Adrenal gland (tissue), 19 donors: ENCODE measurements at regions of chr20 and their contacts with region 1.

Region 1: GRCh38 chr20:38692436-38693411 is 31.6 kb upstream of the SLC32A1 start:
- DNase-seq: peak; percentile 32 to 74 (median 65)
- H3K4me3 ChIP-seq: no peak overlapping the region
- H3K27ac ChIP-seq: no peak overlapping the region
- H3K4me1 ChIP-seq: no peaks in the 10 kb centered on the region
- H3K27me3 ChIP-seq: peaks cover 6% of the 10 kb centered on the region
- CTCF ChIP-seq: no peak
- POLR2A ChIP-seq: no peak

Region 2: GRCh38 chr20:38590676-38591471 is 101.8 kb before region 1 on chr20:
- intact Hi-C with region 1: no loop called
- DNase-seq: no peak
- H3K4me3 ChIP-seq: no peak overlapping the region
- H3K27ac ChIP-seq: no peak overlapping the region
- H3K4me1 ChIP-seq: no peaks in the 10 kb centered on the region
- H3K27me3 ChIP-seq: no peaks in the 10 kb centered on the region
- CTCF ChIP-seq: no peak
- POLR2A ChIP-seq: no peak

Region 3: DNA sequence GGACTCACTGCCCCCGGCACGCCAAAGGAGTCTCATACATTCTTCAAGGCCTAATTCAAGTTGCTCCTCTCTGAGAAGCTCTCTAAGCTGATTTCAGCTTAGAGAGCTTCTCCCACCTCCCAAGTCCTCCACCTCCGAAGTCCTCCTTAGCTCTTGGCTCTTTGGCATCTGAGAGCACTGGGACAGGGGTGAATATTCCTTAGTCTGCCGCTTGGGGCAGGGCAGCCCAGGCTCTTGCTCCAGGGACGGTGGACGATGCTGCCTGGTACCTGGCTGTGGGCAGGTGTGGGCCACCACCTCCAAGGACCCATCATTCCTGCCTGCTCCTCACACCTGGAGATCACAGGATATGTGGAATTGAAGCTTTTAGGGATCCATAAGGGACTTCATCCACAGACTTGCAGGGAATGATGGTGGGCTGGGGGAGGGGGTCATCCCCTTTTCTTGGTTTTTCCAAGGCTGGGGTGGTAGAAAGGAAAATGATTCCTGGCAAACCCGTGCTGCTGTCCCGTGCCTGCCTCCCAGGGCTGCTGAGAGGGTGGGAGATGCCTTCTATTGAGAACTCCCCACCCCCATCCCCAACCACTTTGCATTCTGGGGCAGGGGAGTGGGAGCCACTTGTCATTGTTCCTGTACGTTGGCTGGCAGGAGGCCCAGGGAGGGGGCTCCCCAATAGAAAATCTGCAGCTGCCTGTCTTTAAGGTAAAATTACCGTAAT is 33.7 kb before region 1 on chr20:
- intact Hi-C with region 1: loop called in 1 of 2 experiments (anchors 5 kb)
- DNase-seq: peak in 4 of 7 donors; percentile 25 to 59 (median 36)
- H3K4me3 ChIP-seq: no peak overlapping the region
- H3K27ac ChIP-seq: no peak overlapping the region
- H3K4me1 ChIP-seq: no peaks in the 10 kb centered on the region
- H3K27me3 ChIP-seq: no peaks in the 10 kb centered on the region
- CTCF ChIP-seq: peak; percentile 34 to 66 (median 54)
- POLR2A ChIP-seq: no peak